ENCODE measurements at regions of chr2 and their contacts with region 1.

Region 1: GRCh38 chr2:171541202-171541887 is 19.1 kb downstream of the CYBRD1 start:
- DNase-seq: no peak
- H3K4me3 ChIP-seq: no peak overlapping the region
- CTCF ChIP-seq: peak; percentile 20

Region 2: GRCh38 chr2:171237751-171238505 is 303.4 kb before region 1 on chr2:
- CTCF ChIA-PET with region 1: no interaction called
- POLR2A ChIA-PET with region 1: no interaction called
- DNase-seq: no peak
- H3K4me3 ChIP-seq: no peak overlapping the region
- CTCF ChIP-seq: no peak

Region 3: DNA sequence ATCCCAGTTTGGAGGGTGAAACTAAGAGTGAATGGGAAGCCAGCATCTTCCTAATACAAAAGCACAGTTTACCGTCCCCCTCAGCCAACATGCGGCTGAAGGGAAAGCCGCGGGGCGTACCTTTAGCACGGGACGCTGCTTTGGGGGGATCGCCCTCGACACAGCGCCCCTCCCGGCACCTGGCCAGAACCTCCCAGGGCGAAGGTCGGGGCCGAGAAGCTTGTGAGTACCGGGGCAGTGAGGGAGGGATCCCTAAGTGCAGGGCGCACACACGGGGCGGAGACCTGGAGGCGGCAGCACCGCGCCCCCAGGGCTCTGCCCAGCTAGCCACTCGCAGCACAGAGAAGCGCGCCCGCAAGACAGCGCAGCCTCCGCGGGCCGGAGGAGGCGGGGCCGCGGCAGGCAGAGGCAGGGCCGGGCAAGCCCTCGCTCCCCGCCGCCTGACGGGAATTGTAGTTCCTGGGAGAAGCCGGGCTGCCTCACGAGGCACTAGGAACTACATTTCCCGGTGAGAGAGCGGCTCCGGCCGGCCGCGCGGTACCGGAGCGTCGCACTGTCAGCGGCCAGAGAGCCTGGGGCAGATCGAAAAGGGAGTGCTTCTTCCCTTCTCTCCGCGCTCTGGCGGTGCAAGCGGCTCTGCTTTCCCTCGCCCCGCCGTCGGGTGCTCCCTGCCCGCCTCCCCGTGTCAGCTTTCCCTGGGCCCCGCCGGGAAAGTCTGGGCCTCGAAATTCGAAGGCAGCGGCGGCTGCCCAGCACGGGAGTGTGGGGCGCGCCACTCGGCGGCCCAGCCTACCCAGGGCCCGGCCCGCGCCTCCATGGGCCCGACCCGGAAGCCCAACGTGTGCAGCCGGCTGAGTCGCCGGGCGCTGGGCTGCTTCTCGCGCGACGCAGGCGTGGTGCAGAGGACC is 107.3 kb before region 1 on chr2 and contains the starts of genes DCAF17 and METTL8:
- CTCF ChIA-PET with region 1: no interaction called
- POLR2A ChIA-PET with region 1: no interaction called
- DNase-seq: peak; percentile 59
- H3K4me3 ChIP-seq: peak within 1 kb of the TSS; percentile 84
- CTCF ChIP-seq: peak; percentile 42

Region 4: GRCh38 chr2:171513719-171514160 is 27.6 kb before region 1 on chr2:
- CTCF ChIA-PET with region 1: no interaction called
- POLR2A ChIA-PET with region 1: no interaction called
- DNase-seq: no peak
- H3K4me3 ChIP-seq: no peak overlapping the region
- CTCF ChIP-seq: no peak

Region 5: GRCh38 chr2:171529914-171530313 is 11.4 kb before region 1 on chr2:
- CTCF ChIA-PET with region 1: interaction called, 19 read pairs
- POLR2A ChIA-PET with region 1: no interaction called
- DNase-seq: no peak
- H3K4me3 ChIP-seq: no peak overlapping the region
- CTCF ChIP-seq: peak; percentile 35

Measured in AG04449 (cell line).